ENCODE measurements at regions of chrX and their contacts with region 1.

Region 1: DNA sequence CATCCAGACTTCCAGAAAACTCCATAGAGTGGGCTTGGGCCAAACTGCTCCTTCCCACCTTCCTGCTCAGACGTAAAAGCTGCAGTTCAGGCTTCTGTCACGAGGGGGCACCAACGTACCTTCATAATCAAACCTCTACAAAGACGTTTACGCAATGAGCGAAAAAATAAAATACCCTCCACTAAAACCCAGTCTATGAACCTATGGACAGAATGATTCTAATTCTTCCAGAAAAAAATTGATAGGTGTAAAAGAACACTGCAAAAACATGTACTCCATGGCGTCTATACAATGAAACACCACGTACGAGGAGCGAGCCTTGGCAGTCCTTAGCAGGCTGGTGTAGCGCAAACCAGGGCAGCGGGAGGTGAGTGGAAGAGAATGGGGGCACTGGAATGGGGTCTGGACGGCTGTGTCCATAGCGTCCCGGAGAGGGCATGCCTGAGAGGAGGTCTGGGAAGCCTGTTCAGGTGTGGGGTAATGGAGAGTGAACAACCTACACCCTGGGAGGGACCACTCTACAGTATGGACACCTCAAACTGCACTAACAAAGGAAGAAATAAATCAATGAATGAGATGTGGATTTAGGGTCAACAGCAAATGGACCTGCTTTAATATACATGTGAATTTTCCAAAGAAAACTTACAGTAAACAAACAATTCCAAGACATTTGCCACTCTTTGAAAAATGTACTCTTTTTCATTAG is 14.4 kb upstream of the RAB40A start:
- DNase-seq: peak; percentile 94
- H3K4me3 ChIP-seq: peak overlapping the region; percentile 46 to 50 (median 48)
- H3K27ac ChIP-seq: peak overlapping the region; percentile 13 to 62 (median 58)
- H3K4me1 ChIP-seq: peaks cover 0 to 48% (median 14%) of the 10 kb centered on the region in 4 donors
- H3K27me3 ChIP-seq: no peaks in the 10 kb centered on the region
- CTCF ChIP-seq: peak; percentile 72 to 90 (median 86)
- EP300 ChIP-seq: no peak
- POLR2A ChIP-seq: no peak

Region 2: GRCh38 chrX:103629318-103630170 is 95.9 kb after region 1 on chrX:
- intact Hi-C with region 1: loop called (anchors 5 kb)
- DNase-seq: no peak
- H3K4me3 ChIP-seq: peak overlapping the region; percentile 62 to 75 (median 67)
- H3K27ac ChIP-seq: peak overlapping the region; percentile 90 to 93 (median 92)
- H3K4me1 ChIP-seq: peaks cover 5 to 37% (median 23%) of the 10 kb centered on the region in 4 donors
- H3K27me3 ChIP-seq: no peaks in the 10 kb centered on the region
- CTCF ChIP-seq: peak; percentile 45 to 53 (median 47)
- EP300 ChIP-seq: peak; percentile 54
- POLR2A ChIP-seq: no peak

Region 3: DNA sequence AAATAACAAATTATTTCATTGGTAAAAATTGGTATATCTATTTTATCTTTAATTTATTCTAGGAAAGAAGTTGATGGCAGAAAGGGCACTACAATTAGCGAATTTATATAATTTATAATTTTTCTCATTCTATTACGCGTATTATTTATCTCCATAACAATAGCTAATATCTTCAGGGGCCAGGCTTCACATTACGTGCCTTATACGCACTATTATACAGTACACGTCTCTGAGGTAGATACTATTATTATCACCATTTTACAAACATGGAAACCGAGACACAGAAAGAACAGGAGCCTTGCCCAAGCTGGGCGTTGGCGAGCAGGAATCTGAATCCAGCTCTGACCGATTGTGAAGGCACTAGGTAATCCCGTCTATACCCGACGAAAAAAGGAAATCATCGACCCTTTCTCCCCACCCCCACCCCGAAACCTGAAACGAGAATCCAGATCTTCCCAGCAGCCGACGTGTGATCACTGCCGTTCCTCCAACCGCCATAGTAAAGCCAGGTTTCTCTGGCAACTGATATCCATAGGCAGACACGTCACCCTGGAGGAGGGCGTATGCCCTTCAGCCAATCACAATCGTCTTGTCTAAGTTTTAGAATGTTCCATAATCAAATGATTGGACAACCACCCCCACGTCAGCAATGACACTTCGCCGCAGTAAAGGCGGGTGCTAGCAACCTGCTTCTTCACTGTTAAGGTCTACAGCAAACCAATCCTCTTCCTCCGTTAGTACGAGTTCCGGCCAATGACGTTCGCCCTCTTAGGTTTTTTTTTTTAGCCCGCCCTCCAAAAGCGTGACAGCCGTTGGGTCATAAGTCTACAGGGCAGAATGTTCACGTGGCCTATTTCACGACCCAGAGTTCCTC is 152.8 kb after region 1 on chrX and contains the start of gene MORF4L2:
- intact Hi-C with region 1: loop called (anchors 5 kb)
- DNase-seq: peak; percentile 97
- H3K4me3 ChIP-seq: peak within 1 kb of the TSS; percentile 55 to 64 (median 62)
- H3K27ac ChIP-seq: peak within 1 kb of the TSS; percentile 91 to 95 (median 94)
- H3K4me1 ChIP-seq: peaks cover 2 to 33% (median 18%) of the 10 kb centered on the region in 4 donors
- H3K27me3 ChIP-seq: no peaks in the 10 kb centered on the region
- CTCF ChIP-seq: no peak
- EP300 ChIP-seq: no peak
- POLR2A ChIP-seq: peak; percentile 73
- total RNA-seq, gene MORF4L2: 299 to 400 (median 353) TPM

Region 4: DNA sequence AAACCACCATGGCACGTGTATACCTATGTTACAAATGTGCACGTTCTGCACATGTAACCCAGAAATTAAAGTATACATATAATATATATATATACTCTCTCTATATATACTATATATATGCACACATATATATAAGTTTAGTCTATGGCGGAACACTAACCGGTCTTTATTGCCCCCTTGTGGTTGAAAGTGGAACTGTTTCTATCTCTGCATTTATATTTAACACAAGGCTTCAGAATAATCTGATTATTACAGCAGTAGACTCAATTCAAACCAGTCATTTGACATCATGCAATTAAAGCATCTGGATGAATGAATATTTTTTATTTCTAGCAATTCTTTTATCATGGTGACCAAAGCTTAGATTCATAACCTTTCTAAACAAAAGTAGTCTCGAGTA is 283.8 kb after region 1 on chrX:
- intact Hi-C with region 1: loop called (anchors 2 kb)
- DNase-seq: no peak
- H3K4me3 ChIP-seq: no peak overlapping the region
- H3K27ac ChIP-seq: no peak overlapping the region
- H3K4me1 ChIP-seq: peaks cover 0 to 4% (median 0%) of the 10 kb centered on the region in 4 donors
- H3K27me3 ChIP-seq: no peaks in the 10 kb centered on the region
- CTCF ChIP-seq: peak; percentile 72 to 80 (median 77)
- EP300 ChIP-seq: no peak
- POLR2A ChIP-seq: no peak

Region 5: GRCh38 chrX:104013158-104013557 is 479.5 kb after region 1 on chrX:
- intact Hi-C with region 1: no loop called
- DNase-seq: no peak
- H3K4me3 ChIP-seq: no peak overlapping the region
- H3K27ac ChIP-seq: no peak overlapping the region
- H3K4me1 ChIP-seq: no peaks in the 10 kb centered on the region
- H3K27me3 ChIP-seq: no peaks in the 10 kb centered on the region
- CTCF ChIP-seq: no peak
- EP300 ChIP-seq: no peak
- POLR2A ChIP-seq: no peak